ENCODE measurements at regions of chr14 and their contacts with region 1.

Region 1: GRCh38 chr14:97095269-97095668 is 298.1 kb downstream of the VRK1 start:
- DNase-seq: no peak
- H3K4me3 ChIP-seq: no peak overlapping the region
- H3K27ac ChIP-seq: no peak overlapping the region
- H3K4me1 ChIP-seq: peaks cover 11% of the 10 kb centered on the region
- H3K27me3 ChIP-seq: no peaks in the 10 kb centered on the region
- CTCF ChIP-seq: 0 out of 2 replicates have a peak, but pooled peaks have one; percentile 17

Region 2: GRCh38 chr14:96938946-96939345 is 156.3 kb before region 1 on chr14:
- CTCF ChIA-PET with region 1: no interaction called
- POLR2A ChIA-PET with region 1: no interaction called
- intact Hi-C with region 1: no loop called
- DNase-seq: no peak
- H3K4me3 ChIP-seq: no peak overlapping the region
- H3K27ac ChIP-seq: no peak overlapping the region
- H3K4me1 ChIP-seq: no peaks in the 10 kb centered on the region
- H3K27me3 ChIP-seq: no peaks in the 10 kb centered on the region
- CTCF ChIP-seq: peak; percentile 62

Region 3: GRCh38 chr14:97046967-97047366 is 48.3 kb before region 1 on chr14:
- CTCF ChIA-PET with region 1: interaction called, 13 read pairs
- POLR2A ChIA-PET with region 1: no interaction called
- intact Hi-C with region 1: no loop called
- DNase-seq: no peak
- H3K4me3 ChIP-seq: no peak overlapping the region
- H3K27ac ChIP-seq: no peak overlapping the region
- H3K4me1 ChIP-seq: no peaks in the 10 kb centered on the region
- H3K27me3 ChIP-seq: no peaks in the 10 kb centered on the region
- CTCF ChIP-seq: no peak

Measured in A673 (cell line).